Adrenal gland (tissue), 19 donors: ENCODE measurements at regions of chr13 and their contacts with region 1.

Region 1: DNA sequence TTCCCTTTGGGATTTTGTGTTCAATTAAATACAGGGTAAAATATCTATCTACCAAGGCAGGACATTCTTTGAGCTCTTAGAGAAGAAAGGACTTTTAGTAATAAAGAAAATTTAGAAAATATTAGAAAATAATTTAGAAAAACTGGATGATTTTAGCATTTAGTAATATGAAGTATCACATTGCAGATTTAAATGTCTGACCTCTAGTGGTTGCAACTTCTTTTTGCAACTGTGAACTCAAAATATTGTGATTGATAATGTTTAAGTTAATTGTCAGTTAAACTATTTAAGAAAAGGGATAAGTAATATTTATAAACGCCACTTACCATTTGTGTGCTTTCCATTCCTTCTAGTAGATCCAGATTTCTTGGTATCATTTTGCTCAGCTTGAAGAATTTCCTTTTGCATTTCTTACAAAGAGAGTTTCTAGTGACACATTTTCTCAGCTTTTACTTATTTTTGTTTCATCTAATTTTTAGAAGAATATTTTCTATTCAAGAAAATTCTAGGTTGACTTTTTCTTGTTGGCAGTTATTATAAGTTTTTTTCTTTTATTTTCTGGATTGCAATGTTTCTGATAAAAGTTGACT is 10.3 kb upstream of the POSTN start:
- DNase-seq: no peak
- H3K4me3 ChIP-seq: no peak overlapping the region
- H3K27ac ChIP-seq: no peak overlapping the region
- H3K4me1 ChIP-seq: no peaks in the 10 kb centered on the region
- H3K27me3 ChIP-seq: no peaks in the 10 kb centered on the region
- CTCF ChIP-seq: peak in 4 of 6 experiments; percentile 8 to 38 (median 14)
- POLR2A ChIP-seq: no peak

Region 2: GRCh38 chr13:37074703-37075102 is 534.1 kb before region 1 on chr13:
- intact Hi-C with region 1: loop called (anchors 5 to 10 kb)
- DNase-seq: no peak
- H3K4me3 ChIP-seq: no peak overlapping the region
- H3K27ac ChIP-seq: no peak overlapping the region
- H3K4me1 ChIP-seq: no peaks in the 10 kb centered on the region
- H3K27me3 ChIP-seq: no peaks in the 10 kb centered on the region
- CTCF ChIP-seq: peak; percentile 19 to 56 (median 44)
- POLR2A ChIP-seq: no peak